ENCODE measurements at regions of chr11 and their contacts with region 1.

Region 1: DNA sequence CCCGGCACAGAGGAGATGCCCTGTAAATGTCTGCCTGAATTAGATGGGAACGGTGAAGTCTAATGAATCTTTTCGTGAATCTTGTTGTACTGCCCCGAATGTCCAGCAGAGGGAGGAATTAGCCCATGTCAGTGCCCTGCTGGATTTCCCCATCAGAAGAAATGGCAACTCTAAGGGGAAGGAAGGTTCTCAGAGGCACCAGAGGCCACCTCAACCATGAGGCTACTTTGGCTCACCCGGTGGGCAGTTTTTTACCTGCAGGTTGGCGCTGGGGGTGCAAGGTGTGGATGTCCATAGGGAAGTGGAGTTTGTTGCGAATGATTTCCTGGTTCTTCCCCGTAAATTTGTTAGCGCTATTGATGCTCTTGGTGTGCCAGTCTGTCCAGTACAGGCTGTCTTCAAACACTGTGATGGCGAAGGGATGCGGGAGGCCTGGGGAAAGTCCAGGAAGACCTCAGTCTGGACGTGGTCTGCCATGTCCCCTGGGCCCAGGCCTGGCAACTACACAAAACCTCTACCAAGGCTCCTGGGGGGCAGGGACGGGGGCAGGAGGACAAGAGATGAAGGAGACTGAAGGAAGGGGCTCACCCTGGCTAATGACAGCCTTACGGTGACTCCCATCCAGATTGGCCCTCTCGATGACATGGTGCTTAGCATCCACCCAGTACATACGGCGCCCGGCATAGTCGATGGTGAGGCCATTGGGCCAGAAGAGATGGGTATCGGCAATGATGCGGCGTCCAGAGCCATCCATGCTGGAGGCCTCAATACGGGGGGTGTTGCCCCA is 28.5 kb downstream of the LRP4 start:
- DNase-seq: peak in 1 of 3 donors; percentile 73
- ATAC-seq: peak; percentile 93 to 99 (median 97)
- H3K4me3 ChIP-seq: no peak overlapping the region
- H3K27ac ChIP-seq: no peak overlapping the region
- H3K4me1 ChIP-seq: no peaks in the 10 kb centered on the region
- H3K27me3 ChIP-seq: no peaks in the 10 kb centered on the region
- CTCF ChIP-seq: peak; percentile 78 to 96 (median 81)
- POLR2A ChIP-seq: no peak

Region 2: GRCh38 chr11:46948378-46949131 is 58.7 kb after region 1 on chr11:
- intact Hi-C with region 1: no loop called
- DNase-seq: no peak
- ATAC-seq: no peak
- H3K4me3 ChIP-seq: no peak overlapping the region
- H3K27ac ChIP-seq: no peak overlapping the region
- H3K4me1 ChIP-seq: peaks cover 0 to 12% (median 0%) of the 10 kb centered on the region in 4 donors
- H3K27me3 ChIP-seq: no peaks in the 10 kb centered on the region
- CTCF ChIP-seq: no peak
- POLR2A ChIP-seq: no peak

Region 3: GRCh38 chr11:47152953-47153950 is 263.4 kb after region 1 on chr11:
- intact Hi-C with region 1: loop called (anchors 5 kb)
- DNase-seq: peak; percentile 73 to 78 (median 78)
- ATAC-seq: peak; percentile 93 to 97 (median 95)
- H3K4me3 ChIP-seq: no peak overlapping the region
- H3K27ac ChIP-seq: no peak overlapping the region
- H3K4me1 ChIP-seq: no peaks in the 10 kb centered on the region
- H3K27me3 ChIP-seq: no peaks in the 10 kb centered on the region
- CTCF ChIP-seq: peak; percentile 89 to 97 (median 95)
- POLR2A ChIP-seq: no peak

Region 4: DNA sequence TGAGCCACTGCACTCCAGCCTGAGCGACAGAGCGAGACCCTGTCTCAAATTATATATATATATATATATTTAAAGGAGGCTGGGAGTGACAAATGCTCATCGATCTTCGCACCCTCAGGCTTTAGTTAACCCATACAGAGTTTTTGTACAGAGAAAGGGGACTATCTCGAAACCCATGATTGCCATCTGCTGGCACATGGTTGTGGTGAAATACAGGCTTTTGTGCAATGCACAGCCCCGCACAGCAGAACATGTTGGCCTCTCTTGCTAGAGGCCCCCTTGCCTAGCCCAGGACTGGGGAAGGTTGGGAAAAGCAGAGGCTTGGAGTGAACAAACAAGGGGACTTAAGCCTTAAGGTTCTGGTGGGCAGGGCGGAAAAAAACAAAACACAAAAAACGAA is 459.0 kb after region 1 on chr11:
- intact Hi-C with region 1: loop called in 1 of 2 experiments (anchors 10 kb)
- DNase-seq: peak in 1 of 3 donors; percentile 44
- ATAC-seq: peak in 3 of 4 donors; percentile 39 to 61 (median 46)
- H3K4me3 ChIP-seq: no peak overlapping the region
- H3K27ac ChIP-seq: no peak overlapping the region
- H3K4me1 ChIP-seq: no peaks in the 10 kb centered on the region
- H3K27me3 ChIP-seq: no peaks in the 10 kb centered on the region
- CTCF ChIP-seq: peak in 3 of 4 donors; percentile 10 to 29 (median 15)
- POLR2A ChIP-seq: no peak